Ascending aorta (tissue), 2 donors: ENCODE measurements at regions of chr15 and their contacts with region 1.

Region 1: DNA sequence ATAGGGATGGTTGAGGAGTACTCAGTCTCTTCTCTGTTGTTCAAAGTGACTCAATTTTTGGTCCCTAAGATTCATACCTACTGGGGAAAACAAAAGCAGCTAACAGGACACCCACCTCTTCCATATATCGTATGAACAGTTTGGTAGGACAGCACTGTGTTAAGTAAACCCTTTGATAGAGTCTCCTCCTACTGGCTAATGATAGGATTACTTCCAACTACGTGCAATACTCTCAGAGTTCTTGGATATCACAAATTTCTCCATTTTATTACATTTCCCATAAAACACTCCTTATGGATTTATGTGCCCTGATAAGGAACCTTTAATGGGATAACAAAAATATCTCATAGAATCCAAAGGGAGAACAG is 200.2 kb upstream of the GOLGA6L4 start:
- DNase-seq: no peak
- H3K4me3 ChIP-seq: no peak overlapping the region
- H3K27ac ChIP-seq: no peak overlapping the region
- H3K4me1 ChIP-seq: no peaks in the 10 kb centered on the region
- H3K27me3 ChIP-seq: no peaks in the 10 kb centered on the region
- CTCF ChIP-seq: peak in 2 of 3 experiments; percentile 28 to 32

Region 2: GRCh38 chr15:83446904-83447709 is 588.3 kb before region 1 on chr15 and contains the start of gene SH3GL3:
- intact Hi-C with region 1: loop called (anchors 10 kb)
- DNase-seq: peak; percentile 47 to 90
- H3K4me3 ChIP-seq: peak within 1 kb of the TSS; percentile 70 to 84
- H3K27ac ChIP-seq: no peak within 1 kb of the TSS
- H3K4me1 ChIP-seq: peaks cover 0 to 2% of the 10 kb centered on the region in 2 donors
- H3K27me3 ChIP-seq: no peaks in the 10 kb centered on the region
- CTCF ChIP-seq: peak in 2 of 3 experiments; percentile 42 to 47
- total RNA-seq, gene SH3GL3: not detected

Region 3: DNA sequence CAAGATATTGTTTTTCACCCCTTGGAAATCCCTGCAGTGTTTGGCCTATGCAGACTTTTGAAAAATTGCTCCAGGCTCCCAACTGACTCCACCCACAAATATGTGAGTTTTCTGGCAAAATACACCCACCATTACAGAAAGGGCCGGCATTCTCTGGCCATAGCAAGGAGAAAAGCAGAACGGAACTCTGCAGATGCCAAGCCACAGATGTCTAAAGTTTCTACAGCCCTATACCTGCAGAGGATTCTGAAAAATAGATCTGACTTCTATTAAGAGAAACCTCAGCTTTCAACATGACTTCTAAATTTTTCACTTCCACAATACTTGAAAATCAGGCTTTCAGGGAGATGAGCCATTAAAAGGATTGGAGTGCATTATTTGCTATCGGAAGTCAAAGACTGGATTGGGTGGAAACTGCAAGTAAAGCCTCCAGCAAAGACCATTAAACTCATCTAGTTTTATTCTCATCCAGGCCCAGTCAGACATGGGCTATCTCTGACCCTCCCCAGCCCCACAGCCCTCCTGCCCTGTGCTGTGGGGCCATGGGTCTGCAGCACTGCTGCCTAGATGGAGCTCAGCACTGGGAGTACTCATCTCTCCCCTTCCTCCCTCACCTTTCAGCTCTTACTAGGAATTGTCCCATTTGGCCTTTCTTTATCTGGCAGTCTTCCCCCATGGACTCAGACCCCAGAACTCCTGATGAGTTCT is 42.9 kb before region 1 on chr15:
- intact Hi-C with region 1: no loop called
- DNase-seq: no peak
- H3K4me3 ChIP-seq: no peak overlapping the region
- H3K27ac ChIP-seq: peak overlapping the region; percentile 70 to 79
- H3K4me1 ChIP-seq: peaks cover 3 to 31% of the 10 kb centered on the region in 2 donors
- H3K27me3 ChIP-seq: no peaks in the 10 kb centered on the region
- CTCF ChIP-seq: no peak

Region 4: GRCh38 chr15:84697236-84697990 is 662.0 kb after region 1 on chr15:
- intact Hi-C with region 1: no loop called
- DNase-seq: no peak
- H3K4me3 ChIP-seq: no peak overlapping the region
- H3K27ac ChIP-seq: no peak overlapping the region
- H3K4me1 ChIP-seq: no peaks in the 10 kb centered on the region
- H3K27me3 ChIP-seq: no peaks in the 10 kb centered on the region
- CTCF ChIP-seq: no peak